ENCODE measurements at regions of chr15 and their contacts with region 1.

Region 1: GRCh38 chr15:68637767-68638404 is 59.1 kb downstream of the CORO2B start:
- DNase-seq: no peak
- H3K4me3 ChIP-seq: no peak overlapping the region
- H3K27ac ChIP-seq: no peak overlapping the region
- H3K4me1 ChIP-seq: peaks cover 19 to 46% of the 10 kb centered on the region in 2 experiments; a peak in 3 of 4 replicates
- H3K27me3 ChIP-seq: no peaks in the 10 kb centered on the region
- CTCF ChIP-seq: no peak
- EP300 ChIP-seq: no peak
- RAD21 ChIP-seq: no peak

Region 2: GRCh38 chr15:68623301-68623892 is 14.5 kb before region 1 on chr15:
- CTCF ChIA-PET with region 1: interaction called, 16 read pairs
- POLR2A ChIA-PET with region 1: no interaction called
- DNase-seq: no peak
- H3K4me3 ChIP-seq: no peak overlapping the region
- H3K27ac ChIP-seq: no peak overlapping the region
- H3K4me1 ChIP-seq: peaks cover 5 to 23% of the 10 kb centered on the region in 2 experiments; a peak in 2 of 4 replicates
- H3K27me3 ChIP-seq: no peaks in the 10 kb centered on the region
- CTCF ChIP-seq: no peak
- EP300 ChIP-seq: no peak
- RAD21 ChIP-seq: no peak

Region 3: DNA sequence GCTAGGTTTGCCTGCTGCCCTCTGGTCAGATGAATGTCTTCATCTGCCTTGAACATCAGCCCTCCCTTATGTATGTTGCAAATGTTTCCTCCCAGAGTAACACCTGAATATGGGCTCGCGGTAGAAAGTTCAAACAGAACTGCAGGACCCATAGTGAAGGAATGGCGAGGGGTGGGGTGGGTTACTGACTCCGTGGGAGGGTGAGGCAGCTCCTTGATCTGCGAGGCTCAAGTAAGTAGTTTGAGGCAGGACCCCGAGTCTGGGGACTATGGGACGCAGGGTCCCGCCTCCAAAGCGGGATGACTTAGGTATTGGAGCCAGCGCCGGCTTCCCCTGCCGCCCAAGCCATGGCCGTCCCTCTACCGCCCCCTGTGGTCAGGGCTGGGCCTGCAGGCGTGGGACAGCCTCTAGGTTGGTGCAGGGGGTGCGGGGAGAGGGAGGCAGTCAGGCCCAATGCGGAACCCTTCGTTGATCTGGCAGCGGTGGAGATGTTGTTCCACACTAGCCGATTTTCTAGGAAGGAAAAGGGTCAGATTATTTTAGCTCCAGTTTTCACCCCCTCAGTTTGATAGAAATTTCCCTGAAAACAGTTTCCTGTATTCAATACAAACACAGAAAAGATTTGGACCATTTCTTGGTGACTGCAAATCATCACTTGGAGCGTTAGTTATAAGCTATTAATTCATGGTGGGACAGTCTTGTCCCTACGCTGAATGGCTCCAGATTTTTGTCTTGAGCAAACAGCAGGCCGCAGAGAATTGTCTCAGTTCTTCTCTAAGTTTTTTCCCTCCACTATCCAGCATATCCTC is 13.2 kb after region 1 on chr15:
- CTCF ChIA-PET with region 1: interaction called, 12 read pairs
- POLR2A ChIA-PET with region 1: no interaction called
- DNase-seq: peak; percentile 62
- H3K4me3 ChIP-seq: no peak overlapping the region; a peak in 1 of 4 replicates
- H3K27ac ChIP-seq: no peak overlapping the region
- H3K4me1 ChIP-seq: peaks cover 0 to 19% of the 10 kb centered on the region in 2 experiments; a peak in 2 of 4 replicates
- H3K27me3 ChIP-seq: no peaks in the 10 kb centered on the region
- CTCF ChIP-seq: peak; percentile 64
- EP300 ChIP-seq: no peak
- RAD21 ChIP-seq: no peak

Measured in SK-N-SH (cell line).